ENCODE measurements at regions of chr1 and their contacts with region 1.

Region 1: GRCh38 chr1:183915625-183916510 is 110.9 kb downstream of the RGL1 start:
- DNase-seq: peak; percentile 70 to 81
- H3K4me3 ChIP-seq: no peak overlapping the region
- H3K27ac ChIP-seq: peak overlapping the region; percentile 33 to 39
- H3K4me1 ChIP-seq: peaks cover 0 to 7% (median 7%) of the 10 kb centered on the region in 4 donors
- H3K27me3 ChIP-seq: no peaks in the 10 kb centered on the region
- CTCF ChIP-seq: peak; percentile 85 to 89

Region 2: DNA sequence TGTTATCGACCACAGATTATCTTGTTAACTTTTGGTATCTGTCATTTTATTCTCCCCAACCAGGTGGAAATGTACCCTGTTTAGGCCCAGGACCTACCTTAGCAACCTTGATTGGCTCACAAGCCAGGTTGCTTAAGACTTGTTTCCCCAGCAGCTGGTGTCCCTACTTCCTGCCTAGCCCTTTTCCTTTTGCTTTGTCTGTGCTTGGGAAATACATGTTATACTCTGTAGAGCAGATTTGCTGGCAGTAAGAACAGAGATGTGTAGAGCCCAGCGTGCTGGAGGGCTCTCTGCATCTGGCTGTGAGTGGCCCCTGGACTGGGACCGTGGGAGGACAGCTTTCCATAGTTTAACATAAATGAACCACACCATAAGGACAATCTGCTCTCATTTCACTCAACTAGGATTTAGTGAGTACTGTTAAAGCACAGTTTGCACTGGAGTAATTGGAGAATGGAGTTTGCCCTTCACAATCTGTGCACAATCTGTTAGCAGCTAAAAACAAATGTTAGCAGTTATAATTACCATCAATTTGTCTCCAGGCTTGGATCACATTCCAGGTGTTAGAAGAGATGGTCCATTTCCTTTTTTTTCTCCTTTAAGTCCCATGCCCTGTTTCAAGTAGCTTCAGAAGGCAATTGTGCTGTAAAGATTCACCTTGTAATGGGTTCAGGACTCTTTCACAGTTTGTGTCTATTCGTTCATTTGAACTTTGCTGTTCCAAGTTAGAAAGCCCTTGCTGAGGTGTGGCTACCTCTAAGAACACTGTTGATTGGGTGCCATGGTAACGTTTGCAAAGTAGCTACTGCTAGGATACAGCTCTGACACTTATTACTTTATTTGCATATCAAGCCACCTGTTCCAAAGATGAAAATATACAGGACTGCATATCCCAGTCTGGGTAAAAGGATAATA is 263.1 kb before region 1 on chr1 and contains the start of gene APOBEC4:
- intact Hi-C with region 1: loop called (anchors 5 kb)
- DNase-seq: no peak
- H3K4me3 ChIP-seq: no peak within 1 kb of the TSS
- H3K27ac ChIP-seq: no peak within 1 kb of the TSS
- H3K4me1 ChIP-seq: peaks cover 0 to 3% (median 0%) of the 10 kb centered on the region in 4 donors
- H3K27me3 ChIP-seq: no peaks in the 10 kb centered on the region
- CTCF ChIP-seq: no peak

Measured in tibial artery (tissue), 4 donors.